Esophagus squamous epithelium (tissue), 5 donors: ENCODE measurements at regions of chr5 and their contacts with region 1.

Region 1: GRCh38 chr5:169302491-169303118 is 1.7 kb upstream of the SLIT3 start:
- DNase-seq: no peak
- H3K4me3 ChIP-seq: no peak overlapping the region
- H3K27ac ChIP-seq: no peak overlapping the region
- H3K4me1 ChIP-seq: peaks cover 0 to 48% (median 18%) of the 10 kb centered on the region in 3 donors
- H3K27me3 ChIP-seq: peaks cover 0 to 89% (median 3%) of the 10 kb centered on the region in 4 donors
- CTCF ChIP-seq: peak; percentile 64 to 91 (median 83)
- POLR2A ChIP-seq: no peak

Region 2: GRCh38 chr5:168987543-168988300 is 314.9 kb before region 1 on chr5:
- intact Hi-C with region 1: loop called (anchors 5 kb)
- DNase-seq: no peak
- H3K4me3 ChIP-seq: no peak overlapping the region
- H3K27ac ChIP-seq: no peak overlapping the region
- H3K4me1 ChIP-seq: peaks cover 0 to 18% (median 6%) of the 10 kb centered on the region in 3 donors
- H3K27me3 ChIP-seq: peaks cover 0 to 37% (median 0%) of the 10 kb centered on the region in 4 donors
- CTCF ChIP-seq: peak; percentile 68 to 88 (median 86)
- POLR2A ChIP-seq: no peak